AG04449 (cell line): ENCODE measurements at regions of chr17 and their contacts with region 1.

Region 1: GRCh38 chr17:29579866-29580771 is 9.3 kb downstream of the GIT1 start:
- DNase-seq: no peak
- H3K4me3 ChIP-seq: no peak overlapping the region
- CTCF ChIP-seq: peak; percentile 95

Region 2: GRCh38 chr17:29597361-29598172 is 17.4 kb after region 1 on chr17:
- CTCF ChIA-PET with region 1: interaction called, 79 read pairs
- POLR2A ChIA-PET with region 1: no interaction called
- DNase-seq: no peak
- H3K4me3 ChIP-seq: no peak overlapping the region
- CTCF ChIP-seq: no peak